CD4-positive, alpha-beta T cell (primary cell): ENCODE measurements at regions of chr4 and their contacts with region 1.

Region 1: DNA sequence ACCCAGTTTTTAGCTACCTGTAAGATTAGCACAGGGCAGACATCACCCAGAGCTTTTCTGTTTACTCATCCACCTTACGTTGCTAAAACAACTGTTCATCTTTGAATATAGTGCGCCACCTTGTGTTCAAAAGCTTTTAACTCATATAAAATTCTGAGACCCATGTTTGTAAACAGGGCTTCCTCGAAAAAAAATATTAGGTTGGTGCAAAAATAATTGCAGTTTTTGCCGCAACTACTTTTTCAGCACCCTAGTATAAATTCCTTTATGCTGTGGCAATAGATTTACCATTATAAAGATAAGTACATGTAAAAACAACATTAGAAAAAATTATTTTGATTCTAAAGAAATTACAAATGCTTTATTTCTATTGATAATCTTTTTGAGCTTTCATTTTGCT is 147.9 kb downstream of the LRBA start:
- DNase-seq: peak in 5 of 14 experiments; percentile 5 to 86 (median 84)
- ATAC-seq: peak; percentile 88
- H3K4me3 ChIP-seq: no peak overlapping the region
- H3K4me3 Mint-ChIP-seq: no peak overlapping the region
- H3K27ac ChIP-seq: no peak overlapping the region
- H3K27ac Mint-ChIP-seq: no peak overlapping the region
- H3K4me1 ChIP-seq: no peaks in the 10 kb centered on the region
- H3K4me1 Mint-ChIP-seq: no peaks in the 10 kb centered on the region
- H3K27me3 ChIP-seq: no peaks in the 10 kb centered on the region
- H3K27me3 Mint-ChIP-seq: no peaks in the 10 kb centered on the region
- CTCF ChIP-seq: peak; percentile 80

Region 2: DNA sequence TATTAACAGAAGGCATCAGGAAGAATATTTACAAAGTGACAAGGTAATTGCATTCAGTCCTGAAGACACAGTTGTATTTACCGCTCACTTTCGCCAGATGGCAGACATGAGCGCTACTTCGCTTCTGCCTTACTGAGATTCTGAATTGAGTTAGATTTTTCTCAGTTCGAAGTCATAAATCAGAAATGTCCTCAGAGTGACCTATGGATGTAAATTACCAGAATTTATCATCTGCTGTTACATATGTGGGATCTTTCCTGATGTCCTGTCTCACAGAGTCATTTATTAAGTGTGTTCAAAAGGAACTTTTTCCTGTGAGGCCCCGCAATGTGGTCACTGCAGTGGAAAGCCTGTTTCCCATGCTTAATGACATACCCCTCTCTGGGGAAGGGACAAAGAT is 886.2 kb before region 1 on chr4:
- CTCF ChIA-PET with region 1: interaction called, 3 read pairs
- POLR2A ChIA-PET with region 1: no interaction called
- intact Hi-C with region 1: loop called (anchors 1 to 2 kb)
- DNase-seq: peak; percentile 2 to 62 (median 22)
- ATAC-seq: peak; percentile 46
- H3K4me3 ChIP-seq: no peak overlapping the region
- H3K4me3 Mint-ChIP-seq: no peak overlapping the region
- H3K27ac ChIP-seq: no peak overlapping the region
- H3K27ac Mint-ChIP-seq: no peak overlapping the region
- H3K4me1 ChIP-seq: no peaks in the 10 kb centered on the region
- H3K4me1 Mint-ChIP-seq: peaks cover 5% of the 10 kb centered on the region
- H3K27me3 ChIP-seq: no peaks in the 10 kb centered on the region
- H3K27me3 Mint-ChIP-seq: peaks cover 3% of the 10 kb centered on the region
- CTCF ChIP-seq: peak; percentile 77

Region 3: GRCh38 chr4:150297861-150298474 is 569.2 kb before region 1 on chr4:
- CTCF ChIA-PET with region 1: interaction called, 7 read pairs
- POLR2A ChIA-PET with region 1: no interaction called
- intact Hi-C with region 1: loop called (anchors 1 to 5 kb)
- DNase-seq: peak in 5 of 14 experiments; percentile 5 to 40 (median 30)
- ATAC-seq: no peak
- H3K4me3 ChIP-seq: no peak overlapping the region
- H3K4me3 Mint-ChIP-seq: no peak overlapping the region
- H3K27ac ChIP-seq: no peak overlapping the region
- H3K27ac Mint-ChIP-seq: no peak overlapping the region
- H3K4me1 ChIP-seq: no peaks in the 10 kb centered on the region
- H3K4me1 Mint-ChIP-seq: no peaks in the 10 kb centered on the region
- H3K27me3 ChIP-seq: no peaks in the 10 kb centered on the region
- H3K27me3 Mint-ChIP-seq: no peaks in the 10 kb centered on the region
- CTCF ChIP-seq: peak; percentile 49

Region 4: GRCh38 chr4:150746156-150746555 is 121.0 kb before region 1 on chr4:
- CTCF ChIA-PET with region 1: no interaction called
- POLR2A ChIA-PET with region 1: no interaction called
- intact Hi-C with region 1: no loop called
- DNase-seq: no peak
- ATAC-seq: no peak
- H3K4me3 ChIP-seq: no peak overlapping the region
- H3K4me3 Mint-ChIP-seq: no peak overlapping the region
- H3K27ac ChIP-seq: no peak overlapping the region
- H3K27ac Mint-ChIP-seq: no peak overlapping the region
- H3K4me1 ChIP-seq: no peaks in the 10 kb centered on the region
- H3K4me1 Mint-ChIP-seq: peaks cover 4% of the 10 kb centered on the region
- H3K27me3 ChIP-seq: no peaks in the 10 kb centered on the region
- H3K27me3 Mint-ChIP-seq: no peaks in the 10 kb centered on the region
- CTCF ChIP-seq: no peak

Region 5: DNA sequence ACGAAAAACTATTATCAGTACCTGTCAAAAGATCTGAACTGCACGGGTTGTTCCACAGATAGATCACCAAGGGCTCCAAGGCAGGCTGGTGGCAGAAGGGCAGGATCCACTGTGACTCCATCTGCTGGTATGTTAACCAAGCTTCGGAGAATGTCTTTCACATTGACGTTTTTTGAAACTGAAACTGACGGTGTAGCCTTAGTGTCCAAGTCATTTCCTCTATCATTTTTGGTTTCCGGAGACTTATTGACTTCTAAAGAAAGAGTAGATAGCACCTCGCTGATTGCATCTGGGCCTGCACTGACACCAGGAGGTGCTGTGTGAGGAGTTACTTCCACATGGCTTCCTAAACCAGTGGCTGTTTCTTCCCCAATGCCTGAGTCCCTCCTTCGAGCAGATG is 39.0 kb before region 1 on chr4:
- CTCF ChIA-PET with region 1: interaction called, 11 read pairs
- POLR2A ChIA-PET with region 1: no interaction called
- intact Hi-C with region 1: no loop called
- DNase-seq: peak in 13 of 14 experiments; percentile 9 to 90 (median 20)
- ATAC-seq: peak; percentile 93
- H3K4me3 ChIP-seq: peak overlapping the region; percentile 31
- H3K4me3 Mint-ChIP-seq: peak overlapping the region; percentile 65
- H3K27ac ChIP-seq: peak overlapping the region in 1 of 2 donors; percentile 53
- H3K27ac Mint-ChIP-seq: peak overlapping the region; percentile 72
- H3K4me1 ChIP-seq: peaks cover 12% of the 10 kb centered on the region
- H3K4me1 Mint-ChIP-seq: peaks cover 48% of the 10 kb centered on the region
- H3K27me3 ChIP-seq: no peaks in the 10 kb centered on the region
- H3K27me3 Mint-ChIP-seq: no peaks in the 10 kb centered on the region
- CTCF ChIP-seq: peak; percentile 23